Right ventricle myocardium superior (tissue), 1 donor: ENCODE measurements at regions of chr1 and their contacts with region 1.

Region 1: DNA sequence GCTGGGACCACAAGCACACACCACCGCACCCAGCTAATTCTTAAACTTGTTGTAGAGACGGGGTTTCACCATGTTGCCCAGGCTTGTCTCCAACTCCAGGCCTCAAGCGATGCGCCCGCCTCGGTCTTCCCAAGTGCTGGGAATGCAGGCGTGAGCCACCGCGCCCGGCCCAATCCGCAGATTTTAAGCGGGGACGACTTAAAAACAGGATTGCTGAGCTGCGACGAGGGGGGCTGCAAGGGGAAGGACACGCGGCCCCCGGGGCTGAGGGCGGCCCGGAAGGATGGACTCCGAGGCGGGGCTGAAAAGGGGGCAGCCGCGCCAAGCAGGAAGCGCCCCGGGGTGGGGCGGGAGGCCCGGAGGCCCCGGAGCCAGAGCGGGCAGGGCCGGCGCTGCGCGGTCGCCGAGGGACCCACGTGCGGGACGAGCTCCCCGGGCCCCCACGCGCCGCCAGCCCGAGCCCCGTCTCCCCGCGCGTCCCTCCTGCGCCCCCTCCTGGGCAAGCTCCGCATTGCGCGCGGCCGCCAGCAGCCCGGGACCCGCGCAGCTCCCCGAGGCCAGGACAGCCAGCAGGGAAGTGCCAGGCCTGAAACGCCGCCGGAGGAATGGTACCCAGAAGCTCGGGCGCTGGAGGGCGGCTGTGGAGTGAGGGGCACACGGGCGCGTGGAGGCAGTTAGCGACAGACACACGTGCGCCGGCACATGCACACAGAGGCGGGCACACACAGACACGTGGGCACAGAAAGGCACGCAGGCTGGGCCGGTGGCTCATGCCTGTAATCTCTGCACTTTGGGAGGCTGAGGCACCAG is 5.5 kb upstream of the PRKCZ start:
- DNase-seq: peak; percentile 84
- ATAC-seq: peak; percentile 89

Region 2: DNA sequence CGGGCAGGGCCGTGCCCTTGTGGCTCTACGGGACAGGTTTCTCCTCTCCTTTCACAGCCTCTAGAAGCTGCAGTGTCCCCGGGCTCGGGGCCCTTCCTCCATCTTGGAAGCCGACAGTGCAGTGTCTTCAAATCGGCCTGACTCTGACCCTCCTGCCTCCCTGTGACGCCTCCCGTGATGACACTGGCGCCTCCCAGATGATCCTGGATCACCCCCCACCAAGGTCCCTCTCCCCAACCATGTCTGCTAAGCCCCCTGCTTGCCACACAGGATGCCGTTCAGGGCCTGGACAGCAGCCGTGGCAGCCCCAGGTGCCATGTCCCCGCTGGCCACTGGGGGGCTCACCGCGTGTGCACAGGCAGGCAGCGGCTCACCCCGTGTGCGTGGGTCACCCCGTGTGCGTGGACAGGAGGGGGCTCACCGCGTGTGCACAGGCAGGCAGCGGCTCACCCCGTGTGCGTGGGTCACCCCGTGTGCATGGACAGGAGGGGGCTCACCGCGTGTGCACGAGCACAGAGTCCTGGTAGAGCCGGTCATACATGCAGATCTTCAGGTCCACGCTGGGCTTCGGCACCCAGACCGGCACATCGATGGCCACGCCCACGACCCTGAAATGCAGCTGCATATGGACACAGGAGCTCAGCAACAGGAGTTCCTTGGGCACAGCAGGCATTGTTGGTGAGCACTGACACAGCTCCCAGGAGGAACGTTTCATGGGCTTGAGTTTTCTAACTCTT is 100.7 kb before region 1 on chr1:
- intact Hi-C with region 1: loop called (anchors 5 kb)
- DNase-seq: peak; percentile 65
- ATAC-seq: peak; percentile 89

Region 3: DNA sequence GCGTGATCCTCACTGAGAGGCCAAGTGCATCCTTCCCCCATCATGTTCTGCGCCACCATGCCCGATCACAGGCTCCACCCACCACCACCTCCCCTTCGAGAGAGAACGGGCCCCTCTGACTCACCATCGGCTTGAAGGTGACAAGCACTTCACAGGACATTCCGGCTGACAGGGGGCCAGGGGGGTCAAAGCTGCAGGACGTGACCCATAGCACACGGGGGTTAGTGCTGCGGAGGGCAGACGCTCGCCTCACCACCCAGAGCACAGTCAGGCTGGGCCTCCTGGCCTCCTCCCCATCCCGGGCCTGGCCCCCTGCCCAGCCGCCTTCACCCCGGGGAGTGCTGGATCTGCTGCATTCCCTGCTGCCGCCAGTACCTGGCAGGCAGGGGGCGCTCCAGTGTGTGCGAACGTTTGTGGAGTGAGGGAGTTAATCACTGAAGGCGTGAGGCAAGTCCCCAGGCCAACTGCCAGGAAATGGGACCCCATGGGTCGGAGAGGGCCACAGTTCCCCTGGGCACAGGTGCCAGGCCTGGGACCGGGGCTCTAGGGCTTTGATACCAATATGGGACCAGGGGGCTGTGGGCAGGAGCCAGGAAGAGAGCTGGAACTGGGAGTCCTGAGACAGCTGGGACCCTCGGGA is 84.8 kb before region 1 on chr1:
- intact Hi-C with region 1: loop called (anchors 5 kb)
- DNase-seq: peak; percentile 90
- ATAC-seq: peak; percentile 97